Prostate gland (tissue), 2 donors: ENCODE measurements at regions of chr7 and their contacts with region 1.

Region 1: DNA sequence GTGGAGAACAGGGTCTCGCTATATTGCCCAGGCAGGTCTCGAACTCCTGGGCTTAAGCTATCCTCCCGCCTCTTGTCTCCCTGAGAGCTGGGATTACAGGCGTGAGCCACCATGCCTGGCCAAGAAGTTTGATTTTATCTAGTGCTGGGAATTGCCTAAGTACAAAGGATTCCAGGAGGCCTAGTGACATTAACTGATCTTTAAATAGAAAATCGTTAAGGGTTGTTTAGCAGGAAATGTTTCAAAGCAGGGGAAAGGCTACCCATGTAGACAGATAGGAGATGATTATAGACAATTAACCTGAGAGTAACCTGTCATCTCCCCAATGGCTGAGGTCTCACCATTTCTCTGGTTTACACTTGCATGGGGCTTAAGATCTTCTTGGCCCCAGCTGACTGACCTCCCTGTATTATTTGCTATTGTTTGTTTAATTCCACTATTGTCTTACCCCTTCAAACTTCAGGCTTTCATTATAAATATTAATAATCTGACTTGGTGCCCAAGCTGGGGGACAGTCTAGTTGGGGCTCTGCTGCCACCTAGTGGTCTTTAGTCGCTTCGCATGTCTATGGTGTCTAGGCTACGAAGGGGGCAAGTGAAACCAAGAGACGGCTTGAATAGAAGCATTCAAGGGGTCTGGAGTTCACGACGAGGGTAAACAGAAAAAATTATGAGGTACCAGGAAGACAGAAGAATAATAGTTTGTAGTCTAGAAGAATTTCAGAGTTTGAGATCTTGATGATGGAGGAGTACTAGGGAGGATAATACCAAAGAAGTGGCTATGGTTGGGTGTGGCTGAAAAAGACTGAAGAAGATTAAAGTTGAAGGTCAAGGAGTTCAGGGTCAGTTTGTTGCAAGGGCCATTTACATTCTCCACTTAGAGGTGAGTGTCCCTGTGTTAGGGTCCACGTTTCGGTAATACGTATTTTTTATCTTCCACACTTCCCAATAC is 40.4 kb upstream of the BPGM start:
- DNase-seq: peak; percentile 64
- H3K4me3 ChIP-seq: no peak overlapping the region
- H3K27ac ChIP-seq: peak overlapping the region in 1 of 2 donors; percentile 48
- H3K4me1 ChIP-seq: no peaks in the 10 kb centered on the region
- H3K27me3 ChIP-seq: no peaks in the 10 kb centered on the region
- CTCF ChIP-seq: peak; percentile 75 to 88 (median 84)
- POLR2A ChIP-seq: no peak

Region 2: DNA sequence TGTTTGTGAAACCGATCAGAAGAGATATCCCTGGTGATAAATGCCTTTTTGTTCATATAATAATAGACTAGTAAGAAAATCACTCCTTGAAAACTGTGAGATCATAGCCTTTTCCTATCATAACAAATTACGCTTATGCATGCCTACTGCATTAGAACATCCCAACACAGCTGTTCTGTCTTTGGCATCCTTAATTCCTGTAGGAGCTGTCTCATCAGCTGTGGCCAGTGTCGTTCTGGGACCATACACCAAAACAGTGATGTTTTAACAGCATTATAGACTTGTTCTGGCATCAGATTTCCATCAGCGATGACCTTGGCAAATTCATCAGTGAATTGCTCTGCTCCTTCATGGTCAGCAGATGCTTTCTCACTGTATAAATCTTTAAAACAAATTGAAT is 902.7 kb before region 1 on chr7:
- intact Hi-C with region 1: no loop called
- DNase-seq: no peak
- H3K4me3 ChIP-seq: no peak overlapping the region
- H3K27ac ChIP-seq: no peak overlapping the region
- H3K4me1 ChIP-seq: no peaks in the 10 kb centered on the region
- H3K27me3 ChIP-seq: no peaks in the 10 kb centered on the region
- CTCF ChIP-seq: no peak
- POLR2A ChIP-seq: no peak

Region 3: DNA sequence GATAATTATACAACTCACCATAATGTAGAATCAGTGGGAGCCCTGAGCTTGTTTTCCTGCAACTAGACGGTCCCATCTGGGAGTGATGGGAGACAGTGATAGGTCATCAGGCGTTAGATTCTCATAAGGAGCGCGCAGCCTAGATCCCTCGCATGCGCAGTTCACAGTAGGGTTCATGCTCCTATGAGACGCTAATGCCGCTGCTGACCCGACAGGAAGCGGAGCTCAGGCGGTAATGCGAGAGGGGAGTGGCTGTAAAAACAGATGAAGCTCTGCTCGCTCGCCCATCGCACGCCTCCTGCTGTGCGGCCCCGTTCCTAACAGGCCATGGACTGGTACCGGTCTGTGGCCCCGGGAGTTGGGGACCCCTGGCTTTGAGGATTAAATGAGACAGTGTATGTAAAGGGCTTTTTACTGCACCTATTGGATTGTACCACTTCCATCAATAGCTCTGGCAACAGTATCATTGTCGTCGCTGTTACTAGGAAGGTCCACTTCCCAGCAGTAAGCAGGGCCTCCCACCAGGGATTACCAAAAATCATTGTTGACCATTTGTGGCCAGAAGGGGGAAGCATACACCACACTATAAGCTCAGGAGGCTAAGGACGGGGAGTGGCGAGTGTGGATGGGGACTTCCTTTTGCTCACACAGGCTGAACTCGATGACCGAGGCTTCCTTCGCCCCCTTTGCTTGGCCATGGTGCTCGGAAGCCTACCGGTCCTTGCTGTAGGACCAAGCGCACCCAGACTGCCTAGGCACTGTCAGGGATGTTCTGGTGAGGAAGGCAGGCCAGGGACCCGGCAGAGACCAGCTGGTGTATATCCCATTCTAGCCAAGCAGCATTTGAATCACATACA is 173.7 kb before region 1 on chr7:
- intact Hi-C with region 1: loop called (anchors 2 kb)
- DNase-seq: peak; percentile 72
- H3K4me3 ChIP-seq: peak overlapping the region; percentile 7 to 19
- H3K27ac ChIP-seq: peak overlapping the region; percentile 47 to 53
- H3K4me1 ChIP-seq: no peaks in the 10 kb centered on the region
- H3K27me3 ChIP-seq: no peaks in the 10 kb centered on the region
- CTCF ChIP-seq: peak; percentile 44 to 90 (median 82)
- POLR2A ChIP-seq: peak; percentile 31

Region 4: GRCh38 chr7:134514663-134515062 is 91.6 kb before region 1 on chr7:
- intact Hi-C with region 1: loop called (anchors 2 kb)
- DNase-seq: peak; percentile 41
- H3K4me3 ChIP-seq: no peak overlapping the region
- H3K27ac ChIP-seq: no peak overlapping the region
- H3K4me1 ChIP-seq: no peaks in the 10 kb centered on the region
- H3K27me3 ChIP-seq: peaks cover 3% of the 10 kb centered on the region
- CTCF ChIP-seq: peak; percentile 70 to 79 (median 74)
- POLR2A ChIP-seq: no peak

Region 5: DNA sequence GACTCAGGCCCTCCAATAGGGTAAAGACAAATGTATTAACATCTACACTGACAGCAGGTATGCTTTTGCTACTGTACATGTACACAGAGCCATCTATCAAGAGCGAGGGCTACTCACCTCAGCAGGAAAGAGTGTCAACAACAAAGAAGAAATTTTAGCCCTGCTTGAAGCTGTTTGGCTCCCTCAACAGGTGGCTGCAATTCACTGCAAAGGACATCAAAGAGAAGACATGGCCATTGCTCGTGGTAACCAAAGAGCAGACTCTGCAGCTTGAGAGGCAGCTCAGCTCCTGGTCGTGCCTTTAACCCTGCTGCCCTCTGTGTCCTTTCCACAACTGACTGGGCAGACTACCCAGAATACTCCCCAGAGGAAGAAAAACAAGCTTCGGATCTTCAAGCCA is 52.3 kb before region 1 on chr7:
- intact Hi-C with region 1: loop called (anchors 10 kb)
- DNase-seq: no peak
- H3K4me3 ChIP-seq: no peak overlapping the region
- H3K27ac ChIP-seq: no peak overlapping the region
- H3K4me1 ChIP-seq: no peaks in the 10 kb centered on the region
- H3K27me3 ChIP-seq: no peaks in the 10 kb centered on the region
- CTCF ChIP-seq: no peak
- POLR2A ChIP-seq: no peak